H1 (cell line): ENCODE measurements at regions of chr9 and their contacts with region 1.

Region 1: DNA sequence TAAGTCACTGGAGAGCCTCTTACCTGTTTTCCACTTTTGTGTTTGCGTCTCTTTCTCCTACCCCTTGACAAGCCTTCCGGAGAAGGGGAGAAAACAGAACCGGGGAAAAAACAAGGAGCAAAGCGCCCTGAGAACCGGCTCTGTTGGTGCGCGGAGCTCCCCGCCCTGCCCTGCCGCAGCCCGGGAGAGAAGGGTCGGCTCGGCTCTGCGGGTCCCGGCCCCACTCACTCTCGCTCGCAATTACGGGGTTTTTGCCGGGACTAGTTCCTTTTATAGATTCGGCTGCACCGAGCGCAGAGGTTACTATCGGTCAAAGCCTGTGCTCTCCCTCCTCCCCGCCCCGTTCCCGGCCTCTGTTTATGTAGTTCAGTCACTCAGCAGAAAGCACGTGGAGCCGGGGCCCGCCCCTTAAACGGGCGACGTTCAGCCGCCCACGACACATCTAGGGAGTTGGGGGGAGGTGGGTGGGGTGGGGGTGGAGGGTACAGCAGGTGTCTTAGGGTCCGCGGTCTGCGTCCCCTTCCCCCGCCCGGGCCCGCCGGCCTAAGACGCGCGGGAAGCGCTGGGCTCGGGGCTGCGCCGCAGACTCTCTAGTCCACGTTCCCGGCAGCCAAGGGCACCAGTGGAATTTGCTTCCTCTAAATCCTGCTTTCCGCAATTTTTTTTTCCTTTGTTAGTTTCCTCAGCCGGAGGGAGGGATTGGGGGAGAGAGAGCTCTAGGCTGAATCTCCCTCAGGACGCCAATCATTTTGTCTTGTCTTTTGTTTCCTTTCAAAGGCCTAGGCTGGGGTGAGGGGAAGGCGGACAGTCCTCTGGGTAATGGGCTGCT is at the start of gene ABCA1:
- DNase-seq: peak in 1 of 2 experiments; percentile 83
- H3K4me3 ChIP-seq: peak within 1 kb of the TSS; percentile 71 to 94 (median 88)
- H3K27ac ChIP-seq: no peak within 1 kb of the TSS
- H3K4me1 ChIP-seq: peaks cover 0 to 5% (median 2%) of the 10 kb centered on the region in 4 experiments; a peak in 4 of 7 replicates
- H3K27me3 ChIP-seq: peaks cover 0 to 11% (median 2%) of the 10 kb centered on the region in 4 experiments; a peak in 3 of 7 replicates
- CTCF ChIP-seq: no peak
- EP300 ChIP-seq: no peak
- POLR2A ChIP-seq: peak; percentile 52 to 61; a peak in 2 of 3 replicates
- RAD21 ChIP-seq: 0 out of 4 replicates have a peak, but pooled peaks have one; percentile 1 to 9
- total RNA-seq, gene ABCA1: 7.8 and 8.5 TPM in 2 replicates

Region 2: DNA sequence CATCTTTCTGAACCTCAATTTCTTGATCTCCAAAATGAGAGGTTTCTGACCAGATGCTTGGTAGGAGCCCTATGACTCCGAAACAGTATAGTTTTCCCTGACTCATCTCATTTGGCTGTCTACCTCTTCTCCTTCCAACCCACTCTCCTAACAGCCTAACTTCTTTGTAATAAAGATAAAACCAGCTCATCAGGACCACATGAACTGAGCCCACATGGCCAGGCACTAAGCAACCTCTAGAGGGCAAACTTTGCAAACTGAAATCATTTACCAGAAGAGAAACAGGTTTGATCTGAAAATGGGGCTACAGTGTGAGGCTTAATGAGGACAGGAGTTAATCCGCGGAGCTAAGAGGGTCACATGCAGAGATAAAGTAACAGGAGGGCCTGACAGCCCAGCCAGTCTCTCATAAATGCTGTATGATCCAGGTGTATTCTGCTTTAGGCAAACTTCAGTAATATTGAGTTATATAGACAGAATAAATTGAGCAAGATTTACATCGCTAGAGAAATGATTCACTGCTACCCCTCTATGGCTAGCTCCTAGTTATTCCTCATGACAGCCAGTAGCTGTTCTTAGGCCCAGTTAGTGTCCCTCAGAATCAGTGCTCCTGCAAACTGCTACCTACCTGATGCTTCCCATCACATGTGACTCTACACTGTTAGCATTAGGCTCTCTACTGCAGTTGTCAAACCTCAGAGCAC is 64.8 kb before region 1 on chr9:
- CTCF ChIA-PET with region 1: interaction called, 18 read pairs
- POLR2A ChIA-PET with region 1: interaction called, 13 read pairs
- DNase-seq: no peak
- H3K4me3 ChIP-seq: peak overlapping the region in 1 of 4 experiments; percentile 7; a peak in 1 of 8 replicates
- H3K27ac ChIP-seq: no peak overlapping the region
- H3K4me1 ChIP-seq: peaks cover 14 to 30% (median 26%) of the 10 kb centered on the region in 4 experiments
- H3K27me3 ChIP-seq: no peaks in the 10 kb centered on the region
- CTCF ChIP-seq: peak in 2 of 3 experiments; percentile 65 to 86; a peak in 3 of 4 replicates
- EP300 ChIP-seq: no peak
- POLR2A ChIP-seq: no peak
- RAD21 ChIP-seq: peak; percentile 89 to 90

Region 3: GRCh38 chr9:104961238-104961637 is 33.1 kb after region 1 on chr9:
- CTCF ChIA-PET with region 1: interaction called, 3 read pairs
- POLR2A ChIA-PET with region 1: interaction called, 53 read pairs
- DNase-seq: peak; percentile 38 to 54
- H3K4me3 ChIP-seq: peak overlapping the region in 1 of 4 experiments; percentile 2; a peak in 1 of 8 replicates
- H3K27ac ChIP-seq: no peak overlapping the region
- H3K4me1 ChIP-seq: peaks cover 4 to 7% (median 5%) of the 10 kb centered on the region in 4 experiments; a peak in 5 of 7 replicates
- H3K27me3 ChIP-seq: no peaks in the 10 kb centered on the region
- CTCF ChIP-seq: no peak
- EP300 ChIP-seq: no peak
- POLR2A ChIP-seq: peak in 1 of 2 experiments; percentile 65; a peak in 1 of 3 replicates
- RAD21 ChIP-seq: 0 out of 4 replicates have a peak, but pooled peaks of 1 of the 2 experiments have one; percentile 8

Region 4: GRCh38 chr9:104991144-104991953 is 63.2 kb after region 1 on chr9:
- CTCF ChIA-PET with region 1: interaction called, 12 read pairs
- POLR2A ChIA-PET with region 1: interaction called, 51 read pairs
- DNase-seq: peak in 1 of 2 experiments; percentile 85
- H3K4me3 ChIP-seq: peak overlapping the region; percentile 40 to 75 (median 67)
- H3K27ac ChIP-seq: peak overlapping the region; percentile 44
- H3K4me1 ChIP-seq: peaks cover 21 to 31% (median 26%) of the 10 kb centered on the region in 4 experiments
- H3K27me3 ChIP-seq: peaks cover 3 to 18% (median 8%) of the 10 kb centered on the region in 4 experiments; a peak in 4 of 7 replicates
- CTCF ChIP-seq: no peak
- EP300 ChIP-seq: no peak
- POLR2A ChIP-seq: peak in 1 of 2 experiments; percentile 57; a peak in 2 of 3 replicates
- RAD21 ChIP-seq: no peak; a peak in 1 of 4 replicates

Region 5: GRCh38 chr9:105244003-105244733 is 316.0 kb after region 1 on chr9 and contains the start of gene SLC44A1:
- CTCF ChIA-PET with region 1: interaction called, 3 read pairs
- POLR2A ChIA-PET with region 1: interaction called, 15 read pairs
- DNase-seq: peak; percentile 76 to 91
- H3K4me3 ChIP-seq: peak within 1 kb of the TSS; percentile 70 to 84 (median 78)
- H3K27ac ChIP-seq: peak within 1 kb of the TSS; percentile 89
- H3K4me1 ChIP-seq: peaks cover 0 to 33% (median 15%) of the 10 kb centered on the region in 4 experiments; a peak in 6 of 7 replicates
- H3K27me3 ChIP-seq: no peaks in the 10 kb centered on the region
- CTCF ChIP-seq: no peak
- EP300 ChIP-seq: peak in 1 of 2 experiments; percentile 41; a peak in 1 of 3 replicates
- POLR2A ChIP-seq: no peak; a peak in 1 of 3 replicates
- RAD21 ChIP-seq: peak; percentile 7 to 33; a peak in 3 of 4 replicates
- total RNA-seq, gene SLC44A1: 68.1 and 71.2 TPM in 2 replicates